ENCODE measurements at regions of chr7 and their contacts with region 1.

Region 1: DNA sequence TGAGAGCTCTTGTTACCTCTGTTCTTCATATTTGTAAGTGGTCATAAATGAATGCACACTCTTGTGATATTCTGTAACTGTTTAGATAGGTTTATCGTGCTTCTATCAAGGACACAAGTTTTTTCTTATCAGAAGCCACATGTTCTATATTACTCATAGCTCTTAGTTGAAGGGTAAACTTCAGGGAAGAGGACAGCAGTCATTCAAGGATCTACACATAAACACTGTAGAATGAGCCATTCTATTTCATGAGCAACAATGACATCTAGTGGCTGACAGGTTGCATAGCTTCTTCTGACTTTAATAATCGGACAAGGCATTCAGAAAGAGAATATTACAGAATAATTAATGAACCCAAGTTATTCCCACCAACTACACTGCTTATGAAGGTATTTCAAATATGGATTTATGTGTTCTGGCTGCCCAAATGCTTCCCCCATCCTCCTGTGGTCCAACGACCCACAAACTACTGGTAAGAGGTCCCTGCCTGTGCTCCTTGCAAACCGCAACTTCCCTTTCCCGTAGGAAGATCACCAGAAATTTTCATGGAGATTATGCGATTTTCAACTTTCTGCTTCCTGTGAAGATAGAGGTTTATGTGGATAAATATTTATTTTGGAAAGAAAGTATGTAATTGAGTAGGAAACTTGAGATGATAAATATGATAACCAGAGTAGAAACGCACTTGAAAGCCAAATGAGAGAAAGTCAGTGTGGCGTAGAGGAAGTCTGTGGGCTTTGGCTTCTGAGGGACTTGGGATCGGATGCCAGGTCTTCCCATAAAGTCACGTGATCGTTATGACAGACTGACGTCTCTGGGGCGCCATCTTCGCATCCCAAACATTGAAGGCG is 16.8 kb upstream of the ABCB5 start:
- DNase-seq: no peak

Region 2: DNA sequence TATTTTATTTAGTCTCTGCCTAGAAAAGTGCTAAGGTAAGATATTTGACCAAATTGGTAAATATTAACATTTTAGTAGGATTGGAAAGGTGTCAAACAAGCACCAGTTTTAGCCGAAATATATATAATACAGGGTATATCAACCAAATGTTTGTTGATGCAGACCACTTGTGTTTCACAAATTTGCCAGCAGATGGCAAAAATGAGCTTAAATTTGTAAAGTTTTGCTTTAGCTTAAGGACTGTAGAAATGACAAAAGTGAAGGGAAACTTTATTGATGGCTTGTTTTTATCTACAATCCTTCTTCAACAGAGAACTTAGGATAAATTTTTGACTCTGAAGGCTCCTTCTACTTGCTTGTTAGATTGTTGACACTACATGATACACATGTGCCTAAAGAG is 885.0 kb before region 1 on chr7:
- intact Hi-C with region 1: loop called in 1 of 2 experiments (anchors 10 kb)
- DNase-seq: no peak

Region 3: GRCh38 chr7:19747740-19748339 is 850.8 kb before region 1 on chr7:
- intact Hi-C with region 1: loop called in 1 of 2 experiments (anchors 10 kb)
- DNase-seq: no peak

Region 4: GRCh38 chr7:20064181-20064970 is 534.3 kb before region 1 on chr7:
- intact Hi-C with region 1: loop called in 1 of 2 experiments (anchors 5 kb)
- DNase-seq: no peak

Region 5: DNA sequence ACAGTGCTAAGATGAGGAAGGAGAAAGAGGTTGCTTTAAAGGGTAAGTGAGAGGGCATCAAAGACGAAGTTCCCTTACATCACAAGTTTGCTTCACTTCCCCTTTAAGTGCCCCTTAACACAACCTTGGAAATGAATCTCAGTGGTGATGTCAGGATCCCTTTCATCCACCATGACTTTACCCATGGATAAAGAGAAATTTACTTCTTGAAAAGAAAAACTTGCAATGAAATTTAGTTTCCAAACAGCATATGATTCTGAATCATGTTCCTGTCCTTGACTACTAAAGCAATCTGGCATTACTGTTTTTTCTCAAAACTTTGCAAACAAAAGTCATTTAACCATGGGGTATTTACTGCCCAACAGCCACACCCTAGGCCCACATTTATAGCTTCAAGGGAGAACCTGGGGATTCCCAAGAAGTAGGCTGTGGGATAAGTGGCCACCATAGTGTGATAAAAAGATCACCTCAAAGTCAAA is 132.1 kb before region 1 on chr7:
- intact Hi-C with region 1: no loop called
- DNase-seq: no peak